ENCODE measurements at regions of chr3 and their contacts with region 1.

Region 1: DNA sequence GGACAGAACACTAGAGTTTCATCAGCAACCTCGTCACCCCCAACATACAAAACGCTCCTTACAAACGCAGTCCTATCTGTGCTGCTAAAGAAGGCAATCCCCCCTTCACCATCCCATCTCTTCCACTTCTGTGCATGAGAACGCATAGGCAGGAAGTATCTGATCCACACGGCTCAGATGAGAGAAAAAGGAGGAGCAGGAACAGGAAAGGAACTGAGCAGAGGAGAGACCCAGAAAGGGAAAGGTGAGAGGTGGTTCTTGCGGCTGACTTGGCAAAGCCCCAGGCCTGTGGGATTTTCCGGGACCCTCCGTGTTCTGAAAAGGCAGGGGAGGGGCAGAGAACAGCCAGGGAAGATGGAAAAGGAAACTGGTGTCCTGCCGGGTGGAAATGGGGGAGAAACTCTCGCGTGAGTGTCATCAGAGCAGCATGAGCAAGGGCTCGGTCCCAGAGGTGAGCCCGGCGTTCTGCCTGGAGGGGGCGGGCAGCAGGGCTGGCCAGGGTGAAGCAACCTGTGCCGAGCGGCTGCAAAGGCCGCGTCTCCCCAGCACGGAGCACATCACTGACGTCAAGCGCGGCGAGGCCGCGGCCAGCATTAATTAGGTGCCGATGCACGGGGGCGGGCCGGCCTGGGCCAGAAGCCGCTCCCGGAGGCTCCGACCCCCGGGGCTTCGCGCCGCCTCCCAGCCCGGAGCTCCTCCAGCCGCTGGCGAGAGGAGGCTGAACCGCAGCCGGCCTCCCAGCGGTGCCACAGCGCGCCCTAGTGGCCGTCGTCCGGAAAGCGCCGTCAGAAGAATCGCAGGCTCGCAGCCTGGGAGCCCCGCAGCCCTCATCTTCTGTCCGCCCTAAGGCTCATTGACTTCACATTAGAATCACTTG is 35.8 kb downstream of the CPN2 start:
- DNase-seq: no peak
- ATAC-seq: peak; percentile 92
- H3K4me3 ChIP-seq: peak overlapping the region; percentile 37 to 73
- H3K27ac ChIP-seq: peak overlapping the region; percentile 73
- H3K4me1 ChIP-seq: peaks cover 19% of the 10 kb centered on the region
- H3K27me3 ChIP-seq: no peaks in the 10 kb centered on the region
- CTCF ChIP-seq: peak; percentile 99

Region 2: GRCh38 chr3:193665370-193665989 is 649.8 kb before region 1 on chr3:
- CTCF ChIA-PET with region 1: no interaction called
- POLR2A ChIA-PET with region 1: no interaction called
- in situ Hi-C with region 1: no loop called
- intact Hi-C with region 1: loop called (anchors 5 kb)
- DNase-seq: peak; percentile 15
- ATAC-seq: no peak
- H3K4me3 ChIP-seq: no peak overlapping the region
- H3K27ac ChIP-seq: no peak overlapping the region
- H3K4me1 ChIP-seq: no peaks in the 10 kb centered on the region
- H3K27me3 ChIP-seq: no peaks in the 10 kb centered on the region
- CTCF ChIP-seq: peak; percentile 66; the same call in 1 of the 2 replicates

Region 3: GRCh38 chr3:193768070-193768394 is 547.3 kb before region 1 on chr3:
- CTCF ChIA-PET with region 1: no interaction called
- POLR2A ChIA-PET with region 1: no interaction called
- in situ Hi-C with region 1: loop called (anchors 25 kb)
- intact Hi-C with region 1: no loop called
- DNase-seq: no peak
- ATAC-seq: no peak
- H3K4me3 ChIP-seq: no peak overlapping the region
- H3K27ac ChIP-seq: no peak overlapping the region
- H3K4me1 ChIP-seq: no peaks in the 10 kb centered on the region
- H3K27me3 ChIP-seq: no peaks in the 10 kb centered on the region
- CTCF ChIP-seq: no peak

Region 4: DNA sequence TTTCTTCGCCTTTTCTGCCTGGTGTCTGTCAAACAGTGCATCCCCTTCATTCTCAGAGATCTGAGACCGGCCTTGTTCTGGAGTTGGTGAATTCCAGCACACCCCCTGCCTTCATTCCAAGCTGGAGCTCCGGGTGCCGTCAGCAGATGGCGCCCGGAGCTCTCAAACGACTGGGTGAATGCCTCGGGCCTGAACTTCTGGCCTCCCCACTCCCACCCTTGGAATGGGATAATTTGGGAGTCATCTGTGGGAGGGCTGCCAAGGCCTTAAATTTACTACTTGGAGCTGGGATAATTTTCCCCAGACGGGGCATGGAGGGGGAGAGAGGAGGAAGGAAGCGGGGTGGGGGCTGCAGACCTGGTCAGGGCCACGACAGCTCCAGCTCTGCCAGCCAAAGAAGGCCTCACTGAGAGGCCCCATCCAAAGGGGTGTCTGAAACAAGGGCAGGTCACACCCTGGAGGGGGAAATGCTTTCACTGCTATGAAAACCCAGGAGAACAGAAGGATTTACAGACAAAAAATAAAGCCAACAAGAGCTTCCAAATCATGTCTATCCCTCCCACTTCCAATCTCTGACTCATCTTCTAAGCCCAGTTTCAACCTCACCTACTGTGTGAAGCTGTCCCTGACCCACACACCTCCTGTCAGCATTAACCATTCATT is 534.4 kb before region 1 on chr3:
- CTCF ChIA-PET with region 1: interaction called, 28 read pairs
- POLR2A ChIA-PET with region 1: interaction called, 3 read pairs
- in situ Hi-C with region 1: no loop called
- intact Hi-C with region 1: loop called (anchors 2 kb)
- DNase-seq: no peak
- ATAC-seq: peak; percentile 91
- H3K4me3 ChIP-seq: no peak overlapping the region
- H3K27ac ChIP-seq: 0 out of 2 replicates have a peak overlapping the region, but pooled peaks have one; percentile 12
- H3K4me1 ChIP-seq: peaks cover 24% of the 10 kb centered on the region
- H3K27me3 ChIP-seq: no peaks in the 10 kb centered on the region
- CTCF ChIP-seq: peak; percentile 96

Region 5: GRCh38 chr3:193788189-193788991 is 526.9 kb before region 1 on chr3:
- CTCF ChIA-PET with region 1: interaction called, 10 read pairs
- POLR2A ChIA-PET with region 1: no interaction called
- in situ Hi-C with region 1: no loop called
- intact Hi-C with region 1: loop called (anchors 2 kb)
- DNase-seq: no peak
- ATAC-seq: peak; percentile 95
- H3K4me3 ChIP-seq: no peak overlapping the region
- H3K27ac ChIP-seq: peak overlapping the region; percentile 20; the same call in 1 of the 2 replicates
- H3K4me1 ChIP-seq: peaks cover 9% of the 10 kb centered on the region; the same call in 1 of the 2 replicates
- H3K27me3 ChIP-seq: no peaks in the 10 kb centered on the region
- CTCF ChIP-seq: peak; percentile 95

Region 6: GRCh38 chr3:194265483-194265892 is 49.8 kb before region 1 on chr3:
- CTCF ChIA-PET with region 1: interaction called, 3 read pairs
- POLR2A ChIA-PET with region 1: interaction called, 10 read pairs
- in situ Hi-C with region 1: no loop called
- intact Hi-C with region 1: no loop called
- DNase-seq: no peak
- ATAC-seq: peak; percentile 63
- H3K4me3 ChIP-seq: no peak overlapping the region
- H3K27ac ChIP-seq: no peak overlapping the region
- H3K4me1 ChIP-seq: peaks cover 11% of the 10 kb centered on the region
- H3K27me3 ChIP-seq: no peaks in the 10 kb centered on the region
- CTCF ChIP-seq: no peak

Region 7: DNA sequence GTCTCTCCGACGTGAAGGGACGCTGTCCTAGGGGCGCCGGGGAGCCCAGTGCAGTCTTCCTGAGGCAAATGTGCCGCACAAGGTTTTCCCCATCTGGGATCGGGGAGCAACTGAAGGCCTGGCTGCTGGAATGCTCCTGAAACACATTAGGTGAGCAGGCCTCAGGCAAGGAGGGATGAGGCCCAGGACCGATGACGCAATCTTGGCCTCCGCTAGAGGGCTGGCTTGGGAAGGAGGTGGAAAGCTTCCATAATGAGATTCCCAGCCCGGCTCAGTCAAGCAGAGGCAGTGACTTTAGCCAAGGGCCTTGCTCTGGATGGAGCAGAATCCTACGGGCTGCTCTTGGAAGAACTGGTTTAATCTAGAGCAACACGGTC is 15.0 kb before region 1 on chr3:
- CTCF ChIA-PET with region 1: no interaction called
- POLR2A ChIA-PET with region 1: no interaction called
- in situ Hi-C with region 1: no loop called
- intact Hi-C with region 1: no loop called
- DNase-seq: no peak
- ATAC-seq: peak; percentile 49
- H3K4me3 ChIP-seq: no peak overlapping the region
- H3K27ac ChIP-seq: peak overlapping the region; percentile 25; the same call in 1 of the 2 replicates
- H3K4me1 ChIP-seq: peaks cover 7% of the 10 kb centered on the region
- H3K27me3 ChIP-seq: no peaks in the 10 kb centered on the region
- CTCF ChIP-seq: no peak

Region 8: DNA sequence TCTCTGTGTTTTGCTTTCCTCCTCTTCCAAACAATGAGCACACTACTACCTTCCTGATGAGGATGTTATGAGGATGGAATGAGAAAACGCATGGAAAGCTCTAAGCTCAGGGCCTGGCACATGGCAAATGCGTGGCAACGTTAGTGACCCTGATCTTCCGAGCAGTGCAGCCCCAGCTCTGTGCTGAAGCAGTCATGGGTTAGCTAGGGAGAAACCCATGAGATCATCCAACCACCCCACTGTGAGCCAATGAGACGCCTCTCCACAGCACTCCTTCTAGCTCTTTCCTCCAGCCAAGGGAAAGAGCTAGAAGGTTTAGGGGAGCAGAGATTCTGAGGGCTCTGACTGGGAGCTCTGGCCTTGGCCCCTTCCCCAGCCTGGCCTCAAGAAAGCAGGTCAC is 31.3 kb after region 1 on chr3:
- CTCF ChIA-PET with region 1: no interaction called
- POLR2A ChIA-PET with region 1: no interaction called
- in situ Hi-C with region 1: no loop called
- intact Hi-C with region 1: no loop called
- DNase-seq: no peak
- ATAC-seq: no peak
- H3K4me3 ChIP-seq: no peak overlapping the region
- H3K27ac ChIP-seq: no peak overlapping the region
- H3K4me1 ChIP-seq: peaks cover 11% of the 10 kb centered on the region; the same call in 1 of the 2 replicates
- H3K27me3 ChIP-seq: no peaks in the 10 kb centered on the region
- CTCF ChIP-seq: no peak